ENCODE measurements at regions of chr11 and their contacts with region 1.

Region 1: GRCh38 chr11:67265633-67266423 is 445 bp upstream of the GRK2 start:
- DNase-seq: peak; percentile 33
- ATAC-seq: peak; percentile 73
- H3K4me3 ChIP-seq: peak overlapping the region; percentile 78
- H3K27ac ChIP-seq: no peak overlapping the region
- H3K4me1 ChIP-seq: peaks cover 35% of the 10 kb centered on the region
- H3K27me3 ChIP-seq: no peaks in the 10 kb centered on the region
- CTCF ChIP-seq: peak; percentile 75
- POLR2A ChIP-seq: no peak
- RAD21 ChIP-seq: peak; percentile 73

Region 2: DNA sequence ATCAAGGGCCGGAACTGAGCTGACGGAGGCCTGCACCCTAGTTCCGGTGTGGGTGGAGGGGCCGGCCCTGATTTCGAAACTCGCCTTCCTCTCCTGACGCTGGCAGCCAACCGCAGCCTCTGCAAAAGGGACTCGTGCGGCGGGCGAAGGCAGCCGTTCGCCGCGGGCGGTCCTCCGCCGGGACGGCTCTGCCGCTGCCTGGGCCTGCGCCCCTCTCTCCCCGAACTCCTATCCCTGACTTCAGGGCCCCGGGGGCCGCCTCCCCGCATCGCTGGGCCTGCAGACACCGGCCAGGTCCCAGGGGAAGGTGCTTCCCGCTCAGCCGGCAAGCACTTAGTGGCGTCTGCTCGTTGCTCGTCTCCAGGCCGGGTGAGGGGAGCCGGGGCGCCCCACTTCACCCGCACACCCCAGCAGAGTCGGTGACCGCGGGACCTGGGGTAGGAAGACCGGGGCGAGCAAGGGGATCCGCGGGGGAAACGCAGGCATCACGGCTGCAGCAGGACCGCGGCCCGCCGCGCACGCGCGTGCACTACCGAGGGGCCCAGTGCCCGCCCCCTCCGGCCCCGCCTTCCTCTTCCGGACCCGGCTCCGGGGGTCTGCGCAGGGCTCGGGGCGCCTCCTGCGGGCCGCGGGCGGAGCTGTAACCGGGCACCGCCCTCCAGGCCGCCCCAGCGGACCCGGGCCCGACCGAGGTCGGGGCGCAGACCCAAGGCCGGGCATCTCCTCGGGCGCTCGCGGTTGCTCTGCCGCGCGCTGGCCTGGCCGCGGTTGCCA is 22.8 kb after region 1 on chr11:
- CTCF ChIA-PET with region 1: no interaction called
- POLR2A ChIA-PET with region 1: no interaction called
- dilution Hi-C with region 1: no loop called
- in situ Hi-C with region 1: no loop called
- intact Hi-C with region 1: loop called (anchors 2 kb)
- DNase-seq: peak; percentile 88
- ATAC-seq: peak; percentile 80
- H3K4me3 ChIP-seq: peak overlapping the region; percentile 74
- H3K27ac ChIP-seq: peak overlapping the region; percentile 94
- H3K4me1 ChIP-seq: peaks cover 21% of the 10 kb centered on the region
- H3K27me3 ChIP-seq: no peaks in the 10 kb centered on the region
- CTCF ChIP-seq: peak; percentile 56
- POLR2A ChIP-seq: peak; percentile 85
- RAD21 ChIP-seq: peak; percentile 40

Region 3: GRCh38 chr11:67303132-67303834 is 37.5 kb after region 1 on chr11 and contains the start of gene SSH3:
- CTCF ChIA-PET with region 1: no interaction called
- POLR2A ChIA-PET with region 1: no interaction called
- dilution Hi-C with region 1: no loop called
- in situ Hi-C with region 1: no loop called
- intact Hi-C with region 1: loop called (anchors 1 kb)
- DNase-seq: peak; percentile 34
- ATAC-seq: peak; percentile 78
- H3K4me3 ChIP-seq: peak within 1 kb of the TSS; percentile 100
- H3K27ac ChIP-seq: peak within 1 kb of the TSS; percentile 88
- H3K4me1 ChIP-seq: peaks cover 18% of the 10 kb centered on the region
- H3K27me3 ChIP-seq: no peaks in the 10 kb centered on the region
- CTCF ChIP-seq: no peak
- POLR2A ChIP-seq: no peak
- RAD21 ChIP-seq: no peak
- total RNA-seq, gene SSH3: 7.3 and 7.8 TPM in 2 replicates

Region 4: DNA sequence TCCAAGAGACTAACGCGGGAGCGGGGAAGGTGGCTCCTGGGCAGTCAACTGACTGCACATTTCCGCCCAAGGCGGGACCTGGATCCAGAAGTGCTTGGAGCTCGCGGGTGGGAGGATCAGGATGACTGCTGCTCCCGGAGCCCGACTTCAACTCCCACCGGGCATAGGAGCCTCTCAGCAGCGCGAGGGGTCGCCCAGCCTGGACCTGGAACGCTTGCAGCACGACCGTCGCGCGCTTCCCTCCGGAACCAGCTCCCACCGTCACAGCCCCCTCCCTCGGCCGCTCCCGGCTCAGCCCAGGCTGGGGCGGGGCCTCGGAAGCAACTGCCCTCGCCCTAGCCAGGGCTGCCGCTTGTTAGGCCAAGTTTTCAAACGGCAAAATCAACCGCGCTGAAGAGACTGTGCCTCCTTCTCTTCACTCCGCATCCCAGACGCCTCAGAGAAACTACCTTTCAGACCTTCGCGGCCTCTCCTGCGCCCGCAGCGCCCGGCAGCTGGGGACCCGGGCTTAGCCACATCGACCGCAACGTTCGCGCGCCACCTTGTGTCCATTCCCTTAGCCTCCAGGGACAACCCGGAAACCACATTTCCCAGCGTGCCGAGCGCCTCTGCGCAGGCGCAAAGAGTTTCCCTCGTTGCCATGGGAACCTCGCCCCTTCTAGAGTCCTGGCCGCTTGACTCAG is 51.5 kb after region 1 on chr11:
- CTCF ChIA-PET with region 1: interaction called, 13 read pairs
- POLR2A ChIA-PET with region 1: interaction called, 7 read pairs
- dilution Hi-C with region 1: no loop called
- in situ Hi-C with region 1: loop called (anchors 5 kb)
- intact Hi-C with region 1: loop called (anchors 1 kb)
- DNase-seq: peak; percentile 89
- ATAC-seq: peak; percentile 89
- H3K4me3 ChIP-seq: peak overlapping the region; percentile 67
- H3K27ac ChIP-seq: peak overlapping the region; percentile 42
- H3K4me1 ChIP-seq: 0 out of 2 replicates have a peak, but pooled peaks cover 2% of the 10 kb centered on the region
- H3K27me3 ChIP-seq: no peaks in the 10 kb centered on the region
- CTCF ChIP-seq: peak; percentile 99
- POLR2A ChIP-seq: peak; percentile 62; the same call in 1 of the 2 replicates
- RAD21 ChIP-seq: peak; percentile 96

Region 5: DNA sequence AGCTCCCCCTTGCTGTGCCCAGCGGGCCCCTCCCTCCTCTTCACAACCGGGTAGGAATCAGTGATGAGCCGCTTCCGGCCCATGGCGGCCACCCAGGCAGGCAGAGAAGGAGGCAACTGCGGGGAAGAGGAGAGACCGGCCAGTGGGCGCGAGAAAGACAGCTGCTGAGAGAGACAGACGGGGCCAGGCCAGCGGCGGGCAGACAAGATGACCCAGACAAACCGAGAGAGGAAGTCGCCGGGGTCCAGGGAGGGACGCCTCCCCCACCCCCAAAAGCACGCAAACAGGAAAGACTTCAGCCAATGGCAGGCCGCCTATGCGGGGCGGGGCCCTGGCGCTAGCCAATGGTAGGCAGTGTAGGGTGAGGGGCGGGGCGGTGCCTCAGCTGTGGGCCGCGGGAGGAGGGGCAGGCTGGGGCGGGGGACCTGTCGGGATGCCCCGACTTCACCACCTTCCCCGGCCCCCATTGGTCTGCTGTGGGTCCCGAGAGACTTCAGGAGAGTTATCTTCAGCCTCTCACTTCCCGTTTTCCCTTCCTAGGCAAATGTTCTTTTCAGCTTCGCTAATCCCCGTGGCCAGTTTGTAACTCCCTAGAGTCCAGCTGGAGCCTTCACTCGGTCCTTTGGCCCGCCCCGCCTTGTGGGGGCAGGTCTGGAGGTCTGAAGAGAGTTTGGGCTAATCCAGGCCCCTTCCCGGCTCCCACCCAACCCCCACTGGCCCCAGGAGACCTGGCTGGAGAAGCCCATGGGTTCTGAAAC is 87.7 kb after region 1 on chr11 and contains the start of gene POLD4:
- CTCF ChIA-PET with region 1: no interaction called
- POLR2A ChIA-PET with region 1: interaction called, 10 read pairs
- dilution Hi-C with region 1: no loop called
- in situ Hi-C with region 1: no loop called
- intact Hi-C with region 1: no loop called
- DNase-seq: peak; percentile 92
- ATAC-seq: peak; percentile 83
- H3K4me3 ChIP-seq: peak within 1 kb of the TSS; percentile 53
- H3K27ac ChIP-seq: peak within 1 kb of the TSS; percentile 91
- H3K4me1 ChIP-seq: peaks cover 42% of the 10 kb centered on the region
- H3K27me3 ChIP-seq: no peaks in the 10 kb centered on the region
- CTCF ChIP-seq: no peak
- POLR2A ChIP-seq: peak; percentile 91
- RAD21 ChIP-seq: no peak
- total RNA-seq, gene POLD4: 40.8 and 46.4 TPM in 2 replicates

Region 6: GRCh38 chr11:67382276-67383136 is 116.7 kb after region 1 on chr11:
- CTCF ChIA-PET with region 1: interaction called, 4 read pairs
- POLR2A ChIA-PET with region 1: no interaction called
- dilution Hi-C with region 1: no loop called
- in situ Hi-C with region 1: loop called (anchors 5 kb)
- intact Hi-C with region 1: loop called (anchors 2 kb)
- DNase-seq: peak; percentile 69
- ATAC-seq: peak; percentile 88
- H3K4me3 ChIP-seq: no peak overlapping the region
- H3K27ac ChIP-seq: no peak overlapping the region
- H3K4me1 ChIP-seq: peaks cover 20% of the 10 kb centered on the region
- H3K27me3 ChIP-seq: no peaks in the 10 kb centered on the region; the same call in 1 of the 2 replicates
- CTCF ChIP-seq: peak; percentile 97
- POLR2A ChIP-seq: 0 out of 2 replicates have a peak, but pooled peaks have one; percentile 48
- RAD21 ChIP-seq: peak; percentile 99